Heart right ventricle (tissue), 16 donors: ENCODE measurements at regions of chr3 and their contacts with region 1.

Region 1: GRCh38 chr3:170307671-170308403 is 49.7 kb upstream of the SKIL start:
- DNase-seq: no peak
- ATAC-seq: no peak
- H3K4me3 ChIP-seq: no peak overlapping the region
- H3K27ac ChIP-seq: no peak overlapping the region
- H3K4me1 ChIP-seq: peaks cover 0 to 9% (median 0%) of the 10 kb centered on the region in 9 donors
- H3K27me3 ChIP-seq: no peaks in the 10 kb centered on the region
- CTCF ChIP-seq: no peak

Region 2: GRCh38 chr3:170350515-170351413 is 42.9 kb after region 1 on chr3:
- intact Hi-C with region 1: loop called in 7 of 10 experiments (anchors 5 kb)
- DNase-seq: no peak
- ATAC-seq: no peak
- H3K4me3 ChIP-seq: no peak overlapping the region
- H3K27ac ChIP-seq: no peak overlapping the region
- H3K4me1 ChIP-seq: peaks cover 0 to 17% (median 6%) of the 10 kb centered on the region in 9 donors
- H3K27me3 ChIP-seq: no peaks in the 10 kb centered on the region
- CTCF ChIP-seq: no peak

Region 3: DNA sequence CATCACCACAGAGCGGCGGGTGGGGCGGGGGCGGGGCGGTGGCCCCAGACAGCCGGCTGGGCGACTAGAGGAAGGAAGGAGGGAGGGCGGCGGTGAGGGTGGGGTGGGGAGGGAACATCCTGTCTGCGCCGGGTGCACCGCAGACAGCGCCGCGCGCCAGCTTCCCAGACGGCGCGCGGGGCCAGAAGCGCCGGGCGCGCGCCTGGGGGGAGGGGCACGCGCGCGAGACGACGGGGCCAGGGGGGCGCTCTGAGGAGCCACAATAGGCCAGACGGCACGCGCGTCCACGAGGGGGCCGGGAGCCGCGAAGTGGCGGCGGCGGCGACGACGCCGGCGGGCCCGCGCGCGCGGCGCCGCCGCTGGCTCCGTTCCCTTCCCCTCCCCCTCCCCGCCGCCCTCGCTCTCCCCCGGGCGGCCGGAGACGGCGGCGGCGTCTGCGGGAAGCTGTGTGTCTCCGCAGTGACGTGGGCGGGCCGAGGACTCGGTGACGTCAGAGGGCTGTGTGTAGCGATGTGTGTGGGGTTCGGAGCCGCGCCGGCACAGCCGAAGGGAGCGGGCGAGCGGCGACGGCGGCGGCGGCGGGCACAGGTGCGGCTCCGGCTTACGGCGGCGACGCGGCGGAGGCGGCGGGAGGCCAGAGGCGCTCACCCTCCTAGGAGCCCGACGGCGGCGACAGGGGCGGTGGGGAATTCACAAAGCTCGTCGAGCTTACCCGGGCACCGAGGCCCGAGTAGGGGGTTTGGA is 49.5 kb after region 1 on chr3 and contains the start of gene SKIL:
- intact Hi-C with region 1: loop called in 7 of 10 experiments (anchors 5 kb)
- DNase-seq: peak; percentile 97 to 98
- ATAC-seq: peak; percentile 82 to 90 (median 86)
- H3K4me3 ChIP-seq: peak within 1 kb of the TSS; percentile 77 to 100 (median 98)
- H3K27ac ChIP-seq: peak within 1 kb of the TSS; percentile 97 to 100 (median 100)
- H3K4me1 ChIP-seq: peaks cover 0 to 65% (median 47%) of the 10 kb centered on the region in 9 donors
- H3K27me3 ChIP-seq: no peaks in the 10 kb centered on the region
- CTCF ChIP-seq: peak in 4 of 9 donors; percentile 9 to 28 (median 22)
- total RNA-seq, gene SKIL: 17.7 to 32.1 (median 24.9) TPM

Region 4: GRCh38 chr3:170405101-170405500 is 97.3 kb after region 1 on chr3:
- intact Hi-C with region 1: loop called in 9 of 10 experiments (anchors 2 to 10 kb)
- DNase-seq: no peak
- ATAC-seq: no peak
- H3K4me3 ChIP-seq: no peak overlapping the region
- H3K27ac ChIP-seq: no peak overlapping the region
- H3K4me1 ChIP-seq: no peaks in the 10 kb centered on the region
- H3K27me3 ChIP-seq: no peaks in the 10 kb centered on the region
- CTCF ChIP-seq: no peak

Region 5: GRCh38 chr3:170414202-170414663 is 106.4 kb after region 1 on chr3:
- intact Hi-C with region 1: loop called in 9 of 10 experiments (anchors 2 to 10 kb)
- DNase-seq: peak in 1 of 2 donors; percentile 25
- ATAC-seq: peak in 5 of 8 donors; percentile 29 to 51 (median 42)
- H3K4me3 ChIP-seq: no peak overlapping the region
- H3K27ac ChIP-seq: no peak overlapping the region
- H3K4me1 ChIP-seq: peaks cover 1 to 17% (median 12%) of the 10 kb centered on the region in 9 donors
- H3K27me3 ChIP-seq: peaks cover 0 to 38% (median 31%) of the 10 kb centered on the region in 7 donors
- CTCF ChIP-seq: peak; percentile 82 to 98 (median 92)

Region 6: GRCh38 chr3:170689893-170690660 is 382.2 kb after region 1 on chr3:
- intact Hi-C with region 1: loop called in 3 of 10 experiments (anchors 5 to 10 kb)
- DNase-seq: peak; percentile 57 to 72
- ATAC-seq: peak in 7 of 8 donors; percentile 51 to 84 (median 73)
- H3K4me3 ChIP-seq: no peak overlapping the region
- H3K27ac ChIP-seq: no peak overlapping the region
- H3K4me1 ChIP-seq: peaks cover 0 to 5% (median 0%) of the 10 kb centered on the region in 9 donors
- H3K27me3 ChIP-seq: no peaks in the 10 kb centered on the region
- CTCF ChIP-seq: peak; percentile 48 to 84 (median 78)